B cell (primary cell): ENCODE measurements at regions of chr4 and their contacts with region 1.

Region 1: DNA sequence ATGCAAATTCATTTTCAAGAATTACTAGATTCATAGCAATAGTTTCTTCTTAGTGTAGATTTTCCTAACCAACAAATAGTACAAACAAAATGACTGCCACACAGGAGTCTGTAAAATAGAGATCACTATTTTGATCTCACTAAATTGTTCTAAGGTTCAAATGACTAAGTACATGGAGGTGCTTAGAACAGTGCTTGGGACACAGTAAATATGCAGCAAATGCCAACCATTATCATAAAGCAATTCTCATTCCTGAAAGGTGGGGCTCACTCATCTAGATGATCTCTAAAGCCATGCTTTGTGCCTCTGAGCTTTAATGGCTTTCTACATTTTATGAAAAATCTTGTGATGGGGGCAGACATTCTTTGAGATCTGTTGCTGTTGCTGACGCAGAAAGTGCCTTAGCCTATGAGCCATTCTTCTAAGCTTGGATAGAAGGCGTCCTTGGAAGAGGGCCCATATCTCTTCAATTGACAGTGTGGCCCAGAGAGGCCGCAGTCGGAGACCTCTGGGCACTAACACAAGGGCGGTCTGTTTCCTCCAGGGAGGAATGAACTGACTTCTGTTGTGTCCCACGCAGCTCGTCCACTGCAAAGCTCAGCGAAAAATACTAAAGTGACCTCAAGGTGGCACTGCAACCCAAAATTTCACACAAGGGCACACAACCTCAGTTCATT is 23.5 kb downstream of the TLR10 start:
- DNase-seq: peak; percentile 84
- ATAC-seq: no peak
- H3K4me3 ChIP-seq: no peak overlapping the region
- H3K4me3 Mint-ChIP-seq: peak overlapping the region; percentile 26
- H3K27ac ChIP-seq: peak overlapping the region; percentile 6 to 11
- H3K27ac Mint-ChIP-seq: peak overlapping the region; percentile 83
- H3K4me1 ChIP-seq: peaks cover 59 to 70% of the 10 kb centered on the region in 2 donors
- H3K4me1 Mint-ChIP-seq: peaks cover 57% of the 10 kb centered on the region
- H3K27me3 ChIP-seq: no peaks in the 10 kb centered on the region
- H3K27me3 Mint-ChIP-seq: no peaks in the 10 kb centered on the region
- CTCF ChIP-seq: peak; percentile 78

Region 2: GRCh38 chr4:38601244-38601897 is 157.9 kb before region 1 on chr4:
- CTCF ChIA-PET with region 1: no interaction called
- POLR2A ChIA-PET with region 1: no interaction called
- intact Hi-C with region 1: no loop called
- DNase-seq: no peak
- ATAC-seq: no peak
- H3K4me3 ChIP-seq: no peak overlapping the region
- H3K4me3 Mint-ChIP-seq: no peak overlapping the region
- H3K27ac ChIP-seq: no peak overlapping the region
- H3K27ac Mint-ChIP-seq: no peak overlapping the region
- H3K4me1 ChIP-seq: no peaks in the 10 kb centered on the region
- H3K4me1 Mint-ChIP-seq: no peaks in the 10 kb centered on the region
- H3K27me3 ChIP-seq: no peaks in the 10 kb centered on the region
- H3K27me3 Mint-ChIP-seq: no peaks in the 10 kb centered on the region
- CTCF ChIP-seq: no peak

Region 3: DNA sequence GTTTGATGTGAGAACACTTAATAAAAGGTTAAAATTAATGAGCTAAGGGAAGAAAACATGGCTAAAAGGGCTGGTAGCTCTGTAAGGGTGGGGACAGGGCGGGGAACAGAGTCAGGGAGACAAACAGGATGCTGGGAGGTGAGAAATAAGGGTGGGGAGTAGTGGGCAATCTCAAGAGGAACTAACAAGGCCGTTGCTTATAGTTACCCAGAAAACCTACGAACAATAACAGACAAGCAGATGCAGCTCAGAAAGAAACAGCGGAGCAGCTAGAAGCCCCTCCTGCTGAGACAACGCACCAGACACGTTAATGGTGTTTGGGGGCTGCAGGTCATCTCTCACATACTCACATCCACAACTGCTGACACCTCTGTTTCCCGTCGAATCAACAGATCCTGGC is 105.0 kb before region 1 on chr4:
- CTCF ChIA-PET with region 1: no interaction called
- POLR2A ChIA-PET with region 1: no interaction called
- intact Hi-C with region 1: no loop called
- DNase-seq: peak; percentile 75
- ATAC-seq: peak; percentile 90
- H3K4me3 ChIP-seq: peak overlapping the region in 2 of 5 experiments; percentile 5 to 6
- H3K4me3 Mint-ChIP-seq: peak overlapping the region; percentile 79
- H3K27ac ChIP-seq: peak overlapping the region; percentile 88 to 96
- H3K27ac Mint-ChIP-seq: peak overlapping the region; percentile 96
- H3K4me1 ChIP-seq: peaks cover 33 to 36% of the 10 kb centered on the region in 2 donors
- H3K4me1 Mint-ChIP-seq: peaks cover 39% of the 10 kb centered on the region
- H3K27me3 ChIP-seq: no peaks in the 10 kb centered on the region
- H3K27me3 Mint-ChIP-seq: no peaks in the 10 kb centered on the region
- CTCF ChIP-seq: no peak

Region 4: DNA sequence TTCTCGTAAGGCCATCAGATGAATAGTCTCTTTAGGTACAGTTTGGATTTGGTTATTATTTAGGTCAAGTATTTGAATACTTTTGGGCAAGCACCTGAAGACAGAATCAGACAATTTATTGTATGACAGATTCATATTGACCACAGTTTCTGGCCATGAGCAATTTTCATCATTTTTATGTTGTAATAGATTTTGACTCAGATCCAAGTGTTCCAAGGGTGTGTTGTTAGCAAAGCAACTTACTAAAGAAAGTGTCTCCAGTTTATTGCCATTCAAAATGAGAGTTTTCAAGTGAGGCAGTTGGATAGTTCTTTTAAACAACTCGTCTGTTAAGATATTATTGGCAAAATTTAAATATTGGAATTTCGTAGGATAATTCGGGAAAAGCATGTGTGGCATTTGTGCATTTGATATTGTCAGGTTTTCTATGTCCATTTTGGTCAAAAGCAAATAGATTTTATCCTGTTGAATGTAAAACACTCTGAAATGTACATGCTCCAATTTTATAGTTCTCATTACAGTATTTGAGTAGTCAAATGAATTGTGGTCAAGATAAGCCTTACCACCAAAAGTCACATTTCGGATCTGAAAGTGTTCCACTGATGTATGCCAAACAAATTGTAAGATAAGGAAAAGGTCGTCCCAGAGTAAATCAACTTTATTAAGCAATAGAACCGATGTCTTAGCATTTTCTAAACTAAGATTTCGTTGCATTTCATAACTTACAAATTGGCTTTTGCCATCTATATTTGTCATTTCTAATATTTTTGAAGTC is 15.1 kb after region 1 on chr4:
- CTCF ChIA-PET with region 1: interaction called, 620 read pairs
- POLR2A ChIA-PET with region 1: interaction called, 110 read pairs
- intact Hi-C with region 1: loop called (anchors 1 kb)
- DNase-seq: no peak
- ATAC-seq: no peak
- H3K4me3 ChIP-seq: no peak overlapping the region
- H3K4me3 Mint-ChIP-seq: no peak overlapping the region
- H3K27ac ChIP-seq: peak overlapping the region in 1 of 2 donors; percentile 67
- H3K27ac Mint-ChIP-seq: peak overlapping the region; percentile 82
- H3K4me1 ChIP-seq: peaks cover 30 to 49% of the 10 kb centered on the region in 2 donors
- H3K4me1 Mint-ChIP-seq: peaks cover 75% of the 10 kb centered on the region
- H3K27me3 ChIP-seq: no peaks in the 10 kb centered on the region
- H3K27me3 Mint-ChIP-seq: no peaks in the 10 kb centered on the region
- CTCF ChIP-seq: no peak

Region 5: GRCh38 chr4:38815885-38816782 is 56.9 kb after region 1 on chr4:
- CTCF ChIA-PET with region 1: interaction called, 17 read pairs
- POLR2A ChIA-PET with region 1: no interaction called
- intact Hi-C with region 1: no loop called
- DNase-seq: peak; percentile 88
- ATAC-seq: peak; percentile 87
- H3K4me3 ChIP-seq: peak overlapping the region in 3 of 5 experiments; percentile 5 to 53 (median 16)
- H3K4me3 Mint-ChIP-seq: peak overlapping the region; percentile 63
- H3K27ac ChIP-seq: peak overlapping the region; percentile 93 to 96
- H3K27ac Mint-ChIP-seq: peak overlapping the region; percentile 94
- H3K4me1 ChIP-seq: peaks cover 53 to 58% of the 10 kb centered on the region in 2 donors
- H3K4me1 Mint-ChIP-seq: peaks cover 60% of the 10 kb centered on the region
- H3K27me3 ChIP-seq: no peaks in the 10 kb centered on the region
- H3K27me3 Mint-ChIP-seq: no peaks in the 10 kb centered on the region
- CTCF ChIP-seq: no peak

Region 6: GRCh38 chr4:38889143-38889542 is 129.9 kb after region 1 on chr4:
- CTCF ChIA-PET with region 1: interaction called, 20 read pairs
- POLR2A ChIA-PET with region 1: no interaction called
- intact Hi-C with region 1: no loop called
- DNase-seq: no peak
- ATAC-seq: no peak
- H3K4me3 ChIP-seq: no peak overlapping the region
- H3K4me3 Mint-ChIP-seq: no peak overlapping the region
- H3K27ac ChIP-seq: no peak overlapping the region
- H3K27ac Mint-ChIP-seq: peak overlapping the region; percentile 37
- H3K4me1 ChIP-seq: no peaks in the 10 kb centered on the region
- H3K4me1 Mint-ChIP-seq: peaks cover 4% of the 10 kb centered on the region
- H3K27me3 ChIP-seq: no peaks in the 10 kb centered on the region
- H3K27me3 Mint-ChIP-seq: no peaks in the 10 kb centered on the region
- CTCF ChIP-seq: no peak

Region 7: DNA sequence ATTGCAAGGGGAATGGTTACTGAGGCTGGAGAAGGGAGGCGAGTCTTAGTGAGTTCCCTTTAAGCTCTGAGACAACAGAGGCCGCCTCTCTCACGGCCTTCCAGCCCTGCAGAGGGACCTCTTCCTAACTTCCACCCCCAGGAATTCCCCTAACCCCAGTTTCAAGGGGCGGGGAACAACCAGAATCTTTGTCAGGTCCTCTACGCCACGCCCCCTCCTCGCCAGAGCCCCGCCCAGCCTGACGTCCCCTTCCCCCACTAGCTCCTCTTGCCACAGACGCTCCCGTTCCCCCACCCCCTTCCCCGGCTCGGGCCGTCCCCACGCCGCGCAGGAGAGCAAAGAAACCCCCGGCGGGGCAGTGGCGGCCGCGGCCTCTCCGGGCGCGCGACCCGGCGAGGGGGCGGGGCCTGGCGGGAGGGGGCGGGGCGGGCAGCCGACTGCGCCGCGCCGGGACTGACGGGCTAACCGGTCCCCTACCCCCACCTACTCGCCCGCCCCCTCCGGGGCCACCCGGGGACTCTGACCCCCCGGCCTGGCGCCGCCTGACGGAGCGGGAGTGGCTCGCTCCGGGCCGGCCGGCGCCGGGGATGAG is 285.2 kb after region 1 on chr4:
- CTCF ChIA-PET with region 1: interaction called, 25 read pairs
- POLR2A ChIA-PET with region 1: interaction called, 10 read pairs
- intact Hi-C with region 1: loop called (anchors 1 kb)
- DNase-seq: peak; percentile 99
- ATAC-seq: peak; percentile 85
- H3K4me3 ChIP-seq: peak overlapping the region; percentile 66 to 94 (median 75)
- H3K4me3 Mint-ChIP-seq: peak overlapping the region; percentile 80
- H3K27ac ChIP-seq: peak overlapping the region; percentile 93 to 95
- H3K27ac Mint-ChIP-seq: peak overlapping the region; percentile 90
- H3K4me1 ChIP-seq: peaks cover 45 to 48% of the 10 kb centered on the region in 2 donors
- H3K4me1 Mint-ChIP-seq: peaks cover 59% of the 10 kb centered on the region
- H3K27me3 ChIP-seq: no peaks in the 10 kb centered on the region
- H3K27me3 Mint-ChIP-seq: no peaks in the 10 kb centered on the region
- CTCF ChIP-seq: no peak